Posterior vena cava (tissue), 2 donors: ENCODE measurements at regions of chr11 and their contacts with region 1.

Region 1: DNA sequence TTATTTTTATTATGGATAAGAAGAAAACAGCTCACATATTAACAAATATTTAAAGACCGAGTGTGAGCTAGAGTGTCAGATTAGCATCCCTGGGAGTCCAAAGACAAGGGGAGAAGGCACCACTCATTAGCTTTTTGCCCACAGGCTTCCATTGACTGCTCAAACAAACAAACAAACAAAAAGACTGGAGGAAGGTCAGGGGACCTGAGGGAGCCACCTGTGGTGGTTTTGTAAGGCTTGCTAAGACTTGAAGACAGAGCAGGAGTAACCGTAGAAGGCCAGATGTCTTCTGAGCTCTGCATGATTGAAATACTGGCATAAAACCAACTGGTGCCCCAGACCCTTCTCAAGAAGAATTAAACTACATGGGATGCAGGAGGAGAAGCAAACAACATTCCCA is 395.2 kb upstream of the CNTN5 start:
- DNase-seq: no peak

Region 2: DNA sequence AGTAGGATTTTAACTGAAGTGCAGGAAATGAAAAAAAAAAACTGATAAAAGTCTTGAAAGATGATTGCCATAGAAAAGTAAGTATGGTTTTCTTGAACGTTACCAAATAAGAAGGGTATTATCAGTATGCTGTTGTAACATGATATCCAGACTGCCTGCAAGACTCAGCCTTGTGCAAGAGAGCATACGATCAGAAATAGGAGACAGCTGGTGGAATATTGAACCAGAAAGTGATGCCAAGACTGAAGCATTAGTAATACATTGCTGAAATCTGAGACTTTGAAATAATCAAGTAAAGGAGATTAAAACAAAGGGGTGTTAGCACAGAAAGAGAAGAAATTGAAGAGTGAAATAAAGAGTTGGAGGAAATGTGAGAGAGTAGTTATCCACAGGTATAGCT is 57.5 kb before region 1 on chr11:
- intact Hi-C with region 1: loop called in 1 of 2 experiments (anchors 10 kb)
- DNase-seq: no peak